ENCODE measurements at regions of chr17 and their contacts with region 1.

Region 1: DNA sequence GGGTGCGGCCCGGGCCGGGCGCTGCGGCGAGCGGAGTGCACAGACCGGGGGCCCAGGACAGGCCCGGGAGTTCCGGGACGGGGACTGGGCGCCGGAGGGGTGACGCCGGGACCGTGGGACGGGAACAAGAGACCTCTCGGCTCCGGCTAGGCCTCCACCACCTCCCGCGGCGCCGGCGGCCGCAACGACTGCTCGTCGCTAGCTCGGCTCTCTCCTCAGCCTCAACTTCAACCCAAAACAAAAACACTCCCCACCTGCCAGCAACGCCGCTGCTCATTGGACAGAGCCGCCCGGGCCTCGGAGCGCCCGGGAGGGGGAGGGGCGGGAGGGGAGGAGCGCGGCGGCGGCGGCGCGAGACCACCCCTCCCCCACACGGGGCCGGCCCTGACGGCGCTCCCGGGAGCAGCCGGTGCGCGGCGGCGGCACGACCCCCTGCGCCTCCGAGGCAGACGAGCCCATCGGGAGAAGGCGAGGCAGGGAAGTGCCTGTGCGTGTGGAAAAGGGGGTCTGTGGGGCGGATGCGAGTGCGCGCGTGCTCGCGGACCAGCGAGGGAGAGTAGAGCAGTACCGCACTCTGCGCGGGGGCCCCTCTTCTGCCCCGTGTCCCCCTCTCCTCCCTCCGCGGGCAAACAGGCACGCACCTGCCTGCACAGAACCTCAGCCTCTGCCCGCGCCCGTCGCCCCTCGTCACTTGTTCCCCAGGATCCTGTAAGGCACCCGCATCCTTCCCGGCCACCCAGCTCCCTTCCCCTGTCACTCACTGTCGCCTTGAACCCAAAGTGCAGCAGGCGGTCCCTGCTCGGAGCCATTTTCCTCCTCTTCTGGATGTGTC is at the start of gene FBXL20:
- DNase-seq: peak; percentile 92
- H3K4me3 Mint-ChIP-seq: peak within 1 kb of the TSS; percentile 87
- H3K27ac Mint-ChIP-seq: peak within 1 kb of the TSS; percentile 93
- H3K4me1 Mint-ChIP-seq: peaks cover 22% of the 10 kb centered on the region
- H3K27me3 Mint-ChIP-seq: no peaks in the 10 kb centered on the region
- CTCF ChIP-seq: no peak
- total RNA-seq, gene FBXL20: 13.4 and 16.2 TPM in 2 replicates

Region 2: DNA sequence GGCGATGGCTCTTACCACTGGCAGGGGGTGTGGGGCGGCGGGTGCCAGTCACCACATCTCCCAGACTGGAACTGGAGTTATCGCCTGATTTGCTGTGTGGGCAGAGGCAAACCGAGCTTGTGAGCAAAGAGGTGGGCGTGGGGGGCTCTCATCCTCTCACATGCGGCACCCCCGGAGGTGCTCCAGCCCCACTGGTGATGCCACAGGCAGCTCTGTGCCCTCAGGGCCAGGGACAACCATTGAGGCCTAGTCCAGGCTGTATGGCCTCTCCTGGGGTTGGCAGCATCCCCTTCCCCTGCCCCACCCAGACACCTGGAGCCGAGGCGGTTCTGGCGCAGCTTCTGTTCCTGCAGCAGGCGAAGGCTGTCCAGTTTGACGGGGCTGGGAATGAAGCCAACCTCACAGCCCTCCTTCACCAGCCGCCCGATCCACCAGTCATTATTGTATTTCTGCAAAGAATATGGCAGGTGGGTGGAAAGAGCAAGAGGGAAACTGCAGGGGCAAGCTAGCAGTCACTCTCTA is 215.1 kb before region 1 on chr17:
- CTCF ChIA-PET with region 1: no interaction called
- POLR2A ChIA-PET with region 1: no interaction called
- intact Hi-C with region 1: no loop called
- DNase-seq: no peak
- H3K4me3 Mint-ChIP-seq: no peak overlapping the region
- H3K27ac Mint-ChIP-seq: no peak overlapping the region
- H3K4me1 Mint-ChIP-seq: no peaks in the 10 kb centered on the region
- H3K27me3 Mint-ChIP-seq: no peaks in the 10 kb centered on the region
- CTCF ChIP-seq: no peak

Region 3: DNA sequence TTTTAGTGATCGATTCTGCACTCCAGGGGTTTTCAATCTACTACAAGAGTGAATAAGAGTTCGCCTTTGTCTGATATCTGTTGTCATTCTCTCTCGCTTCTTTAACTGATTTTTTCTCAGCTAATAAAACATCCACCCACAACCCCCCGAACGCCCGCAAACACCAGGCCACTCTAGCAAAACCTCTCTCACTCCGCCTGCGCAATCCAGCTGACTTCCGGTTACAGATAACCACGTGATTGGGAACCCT is 201.9 kb before region 1 on chr17:
- CTCF ChIA-PET with region 1: no interaction called
- POLR2A ChIA-PET with region 1: interaction called, 27 read pairs
- intact Hi-C with region 1: no loop called
- DNase-seq: peak; percentile 95
- H3K4me3 Mint-ChIP-seq: peak overlapping the region; percentile 90
- H3K27ac Mint-ChIP-seq: peak overlapping the region; percentile 100
- H3K4me1 Mint-ChIP-seq: peaks cover 22% of the 10 kb centered on the region
- H3K27me3 Mint-ChIP-seq: no peaks in the 10 kb centered on the region
- CTCF ChIP-seq: no peak

Region 4: DNA sequence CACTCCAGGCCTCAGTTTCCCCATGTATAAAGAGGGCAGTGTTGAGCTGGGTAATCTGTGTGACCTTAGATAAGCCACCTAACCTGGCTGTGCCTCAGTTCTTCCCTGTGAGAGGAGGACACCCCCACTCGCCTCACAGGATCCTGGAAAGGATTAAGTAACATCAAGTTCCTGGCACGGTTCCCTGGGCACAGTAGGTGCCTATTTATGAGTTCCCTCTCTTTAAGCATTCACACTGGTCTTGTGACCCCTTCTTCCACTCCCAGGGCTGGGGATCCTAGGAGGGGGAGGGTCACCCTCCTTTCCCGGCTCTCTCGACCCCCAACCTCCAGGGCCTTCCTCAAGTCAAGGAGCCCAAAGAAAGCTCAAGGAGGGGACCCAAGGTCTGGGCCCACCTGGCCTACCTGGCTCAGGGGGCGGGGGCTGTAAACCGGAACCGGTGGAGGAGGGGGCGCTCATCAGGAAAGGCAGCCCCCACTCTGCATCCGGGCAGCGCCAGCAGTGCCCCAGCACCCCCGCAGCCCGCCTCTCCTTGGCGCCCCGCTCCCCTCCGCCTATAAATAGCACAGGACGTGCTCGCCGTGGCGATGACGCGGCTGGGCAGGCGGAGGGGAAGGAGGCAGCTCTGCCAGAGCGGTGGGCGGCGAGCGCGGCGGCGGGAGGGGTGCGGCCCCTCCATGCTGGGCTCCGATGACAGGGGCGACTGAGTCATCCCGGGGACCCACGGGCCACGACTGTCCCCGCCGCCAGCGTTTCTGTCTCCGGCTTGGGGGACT is 192.1 kb before region 1 on chr17:
- CTCF ChIA-PET with region 1: interaction called, 3 read pairs
- POLR2A ChIA-PET with region 1: interaction called, 14 read pairs
- intact Hi-C with region 1: loop called (anchors 5 kb)
- DNase-seq: peak; percentile 94
- H3K4me3 Mint-ChIP-seq: peak overlapping the region; percentile 54
- H3K27ac Mint-ChIP-seq: peak overlapping the region; percentile 83
- H3K4me1 Mint-ChIP-seq: peaks cover 56% of the 10 kb centered on the region
- H3K27me3 Mint-ChIP-seq: no peaks in the 10 kb centered on the region
- CTCF ChIP-seq: no peak

Region 5: DNA sequence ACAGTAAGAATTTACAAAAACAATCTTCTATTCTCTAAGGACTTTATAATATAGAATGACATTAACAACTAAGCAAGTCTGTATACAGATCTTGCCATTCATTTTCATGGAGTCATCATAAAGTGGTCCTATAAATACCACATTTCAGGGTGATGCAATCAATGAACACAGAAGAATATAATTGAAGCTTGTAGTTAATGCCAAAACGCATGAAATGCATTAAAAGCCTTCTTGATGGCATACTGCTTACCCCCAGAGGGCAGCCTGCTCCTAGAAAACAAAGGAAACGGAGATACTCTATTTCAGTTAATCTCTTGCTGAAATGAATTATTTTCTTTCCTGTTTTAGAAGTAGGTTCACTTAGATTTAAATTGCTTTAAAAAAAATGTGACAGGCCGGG is 130.7 kb before region 1 on chr17:
- CTCF ChIA-PET with region 1: no interaction called
- POLR2A ChIA-PET with region 1: no interaction called
- intact Hi-C with region 1: loop called (anchors 1 kb)
- DNase-seq: peak; percentile 37
- H3K4me3 Mint-ChIP-seq: no peak overlapping the region
- H3K27ac Mint-ChIP-seq: no peak overlapping the region
- H3K4me1 Mint-ChIP-seq: no peaks in the 10 kb centered on the region
- H3K27me3 Mint-ChIP-seq: no peaks in the 10 kb centered on the region
- CTCF ChIP-seq: peak; percentile 47

Region 6: DNA sequence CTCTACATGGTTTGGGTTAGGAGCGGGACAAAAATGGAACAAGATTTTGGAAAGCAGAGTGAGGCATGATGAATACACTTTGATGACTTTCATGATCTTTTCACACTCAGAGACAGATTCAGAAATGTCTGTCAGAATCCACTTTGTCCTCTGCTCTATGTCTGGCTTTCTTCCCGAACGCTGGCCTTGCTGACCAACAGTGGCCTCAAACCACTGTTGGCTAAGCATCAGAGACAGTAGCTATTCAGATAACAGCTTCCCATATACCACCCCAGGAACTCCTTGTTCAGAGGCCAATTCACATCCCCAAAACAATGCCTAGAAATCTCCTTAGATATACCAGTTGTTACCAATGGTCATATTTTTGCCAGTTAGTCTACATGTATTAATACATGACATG is 41.1 kb before region 1 on chr17:
- CTCF ChIA-PET with region 1: no interaction called
- POLR2A ChIA-PET with region 1: no interaction called
- intact Hi-C with region 1: no loop called
- DNase-seq: no peak
- H3K4me3 Mint-ChIP-seq: no peak overlapping the region
- H3K27ac Mint-ChIP-seq: no peak overlapping the region
- H3K4me1 Mint-ChIP-seq: no peaks in the 10 kb centered on the region
- H3K27me3 Mint-ChIP-seq: no peaks in the 10 kb centered on the region
- CTCF ChIP-seq: no peak

Region 7: GRCh38 chr17:39376434-39376833 is 25.2 kb before region 1 on chr17:
- CTCF ChIA-PET with region 1: no interaction called
- POLR2A ChIA-PET with region 1: interaction called, 28 read pairs
- intact Hi-C with region 1: no loop called
- DNase-seq: peak; percentile 4
- H3K4me3 Mint-ChIP-seq: no peak overlapping the region
- H3K27ac Mint-ChIP-seq: peak overlapping the region; percentile 39
- H3K4me1 Mint-ChIP-seq: peaks cover 26% of the 10 kb centered on the region
- H3K27me3 Mint-ChIP-seq: no peaks in the 10 kb centered on the region
- CTCF ChIP-seq: no peak

Region 8: GRCh38 chr17:39450847-39451581 is 49.4 kb after region 1 on chr17 and contains the start of gene MED1:
- CTCF ChIA-PET with region 1: interaction called, 4 read pairs
- POLR2A ChIA-PET with region 1: interaction called, 43 read pairs
- intact Hi-C with region 1: no loop called
- DNase-seq: peak; percentile 99
- H3K4me3 Mint-ChIP-seq: peak within 1 kb of the TSS; percentile 98
- H3K27ac Mint-ChIP-seq: peak within 1 kb of the TSS; percentile 99
- H3K4me1 Mint-ChIP-seq: no peaks in the 10 kb centered on the region
- H3K27me3 Mint-ChIP-seq: no peaks in the 10 kb centered on the region
- CTCF ChIP-seq: no peak
- total RNA-seq, gene MED1: 59.0 TPM in 2 replicates

Region 9: DNA sequence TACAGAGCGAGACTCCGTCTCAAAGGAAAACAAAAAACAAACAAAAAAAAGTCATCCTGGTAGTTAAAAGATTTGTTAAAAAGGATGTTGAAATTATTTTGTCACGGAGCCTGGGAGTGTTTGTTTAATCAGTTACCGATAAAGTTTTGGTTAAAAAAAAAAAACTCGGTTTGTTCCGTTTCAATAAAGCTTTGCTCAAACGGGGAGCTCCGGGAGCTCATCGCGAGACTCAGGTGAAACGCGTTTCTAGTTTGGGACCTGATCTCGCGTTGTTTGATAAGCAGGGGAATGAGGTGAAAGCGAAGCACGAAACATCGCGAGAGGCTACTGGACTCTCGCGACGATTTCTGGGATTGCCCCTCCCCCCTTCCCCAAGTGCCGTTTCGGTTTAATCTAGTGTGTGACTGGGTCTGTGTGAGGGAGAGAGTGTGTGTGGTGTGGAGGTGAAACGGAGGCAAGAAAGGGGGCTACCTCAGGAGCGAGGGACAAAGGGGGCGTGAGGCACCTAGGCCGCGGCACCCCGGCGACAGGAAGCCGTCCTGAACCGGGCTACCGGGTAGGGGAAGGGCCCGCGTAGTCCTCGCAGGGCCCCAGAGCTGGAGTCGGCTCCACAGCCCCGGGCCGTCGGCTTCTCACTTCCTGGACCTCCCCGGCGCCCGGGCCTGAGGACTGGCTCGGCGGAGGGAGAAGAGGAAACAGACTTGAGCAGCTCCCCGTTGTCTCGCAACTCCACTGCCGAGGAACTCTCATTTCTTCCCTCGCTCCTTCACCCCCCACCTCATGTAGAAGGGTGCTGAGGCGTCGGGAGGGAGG is 59.7 kb after region 1 on chr17 and contains the start of gene CDK12:
- CTCF ChIA-PET with region 1: interaction called, 4 read pairs
- POLR2A ChIA-PET with region 1: interaction called, 66 read pairs
- intact Hi-C with region 1: no loop called
- DNase-seq: peak; percentile 100
- H3K4me3 Mint-ChIP-seq: peak within 1 kb of the TSS; percentile 89
- H3K27ac Mint-ChIP-seq: peak within 1 kb of the TSS; percentile 98
- H3K4me1 Mint-ChIP-seq: peaks cover 6% of the 10 kb centered on the region
- H3K27me3 Mint-ChIP-seq: no peaks in the 10 kb centered on the region
- CTCF ChIP-seq: no peak
- total RNA-seq, gene CDK12: 71.1 and 71.3 TPM in 2 replicates